Prostate gland (tissue), 2 donors: ENCODE measurements at regions of chr15 and their contacts with region 1.

Region 1: GRCh38 chr15:80058851-80059785 is at the start of gene ZFAND6:
- DNase-seq: peak; percentile 97
- H3K4me3 ChIP-seq: peak within 1 kb of the TSS; percentile 93 to 94
- H3K27ac ChIP-seq: peak within 1 kb of the TSS; percentile 97 to 99
- H3K4me1 ChIP-seq: no peaks in the 10 kb centered on the region
- H3K27me3 ChIP-seq: no peaks in the 10 kb centered on the region
- CTCF ChIP-seq: peak in 2 of 4 experiments; percentile 13 to 24
- POLR2A ChIP-seq: peak; percentile 70
- total RNA-seq, gene ZFAND6: 103 to 167 TPM

Region 2: DNA sequence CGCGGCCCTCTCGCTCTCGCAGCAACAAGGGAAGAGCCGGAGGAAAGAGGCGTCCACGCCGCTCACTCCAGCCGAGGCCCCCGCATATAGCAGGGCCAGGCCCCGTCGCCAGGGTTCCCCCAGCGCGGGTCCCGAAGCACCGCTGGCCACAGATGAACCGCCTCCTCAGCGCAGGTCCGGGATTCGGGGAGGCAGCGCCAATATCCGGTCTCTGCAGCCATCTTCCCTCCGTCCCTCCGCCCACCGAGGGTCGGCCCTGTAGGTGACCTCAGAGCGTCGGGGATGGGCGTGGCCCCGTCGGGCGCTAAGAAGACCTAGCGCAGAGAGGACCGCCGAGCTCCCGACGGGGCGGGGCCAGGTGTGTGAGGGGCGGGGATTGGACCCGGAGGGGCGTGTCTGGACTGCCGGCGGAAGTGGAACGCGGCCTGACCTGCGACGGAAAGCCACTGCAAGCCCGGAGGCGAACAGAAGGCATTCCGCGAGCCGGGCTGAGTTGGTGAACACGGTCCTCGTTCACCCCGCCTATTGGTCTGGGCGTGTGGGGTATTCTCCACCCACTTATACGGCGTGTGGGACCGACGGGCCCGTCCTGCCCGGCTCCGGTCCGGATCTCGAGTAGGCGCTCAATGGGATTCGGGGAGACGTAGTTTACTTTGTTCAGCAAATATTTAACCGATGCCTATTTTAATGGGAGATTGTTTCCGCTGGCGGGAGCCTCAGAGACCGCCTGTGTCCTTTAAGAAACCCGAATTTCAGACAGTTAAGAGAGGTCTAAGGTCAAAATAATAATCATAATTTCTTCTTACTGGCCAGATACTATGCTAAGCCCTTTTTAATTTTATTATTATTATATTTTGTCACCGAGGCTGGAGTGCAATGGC is 135.4 kb before region 1 on chr15:
- intact Hi-C with region 1: loop called (anchors 10 kb)
- DNase-seq: peak; percentile 96
- H3K4me3 ChIP-seq: peak overlapping the region; percentile 66 to 84
- H3K27ac ChIP-seq: peak overlapping the region; percentile 91 to 96
- H3K4me1 ChIP-seq: no peaks in the 10 kb centered on the region
- H3K27me3 ChIP-seq: no peaks in the 10 kb centered on the region
- CTCF ChIP-seq: peak in 2 of 4 experiments; percentile 7 to 11
- POLR2A ChIP-seq: peak; percentile 80

Region 3: DNA sequence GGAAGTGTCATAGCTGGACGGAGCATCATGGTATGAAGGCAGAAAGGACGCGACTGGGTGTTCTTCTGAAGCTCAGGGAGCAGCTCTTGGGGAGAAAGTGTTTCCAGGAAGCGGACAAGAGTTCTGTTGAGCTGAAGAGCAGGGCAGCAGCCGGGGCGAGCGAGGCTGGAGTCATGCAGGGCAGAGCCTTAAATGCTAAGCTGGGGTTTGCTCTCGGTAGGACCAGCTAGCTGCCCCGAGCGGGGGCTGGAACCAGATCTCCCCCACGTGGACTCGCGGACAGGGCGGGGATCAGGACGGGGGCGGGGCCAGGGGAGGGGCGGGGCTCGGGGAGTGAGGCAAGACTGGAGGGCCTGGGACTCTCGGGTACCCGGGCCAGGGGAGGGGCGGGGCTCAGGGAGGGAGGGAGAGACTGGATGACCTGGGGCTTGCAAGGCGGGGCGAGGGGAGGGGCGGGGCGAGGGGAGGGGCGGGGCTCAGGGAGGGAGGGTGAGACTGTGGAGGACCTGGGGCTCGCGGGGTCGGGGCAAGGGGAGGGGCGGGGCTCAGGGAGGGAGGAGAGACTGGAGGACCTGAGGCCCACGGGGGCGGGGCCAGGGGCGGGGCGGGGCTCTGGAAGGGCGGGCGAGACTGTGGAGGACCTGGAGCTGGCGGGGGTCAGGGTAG is 93.2 kb after region 1 on chr15:
- intact Hi-C with region 1: loop called (anchors 1 kb)
- DNase-seq: peak; percentile 93
- H3K4me3 ChIP-seq: peak overlapping the region; percentile 61 to 63
- H3K27ac ChIP-seq: peak overlapping the region; percentile 86 to 88
- H3K4me1 ChIP-seq: peaks cover 8% of the 10 kb centered on the region
- H3K27me3 ChIP-seq: no peaks in the 10 kb centered on the region
- CTCF ChIP-seq: no peak
- POLR2A ChIP-seq: no peak

Region 4: DNA sequence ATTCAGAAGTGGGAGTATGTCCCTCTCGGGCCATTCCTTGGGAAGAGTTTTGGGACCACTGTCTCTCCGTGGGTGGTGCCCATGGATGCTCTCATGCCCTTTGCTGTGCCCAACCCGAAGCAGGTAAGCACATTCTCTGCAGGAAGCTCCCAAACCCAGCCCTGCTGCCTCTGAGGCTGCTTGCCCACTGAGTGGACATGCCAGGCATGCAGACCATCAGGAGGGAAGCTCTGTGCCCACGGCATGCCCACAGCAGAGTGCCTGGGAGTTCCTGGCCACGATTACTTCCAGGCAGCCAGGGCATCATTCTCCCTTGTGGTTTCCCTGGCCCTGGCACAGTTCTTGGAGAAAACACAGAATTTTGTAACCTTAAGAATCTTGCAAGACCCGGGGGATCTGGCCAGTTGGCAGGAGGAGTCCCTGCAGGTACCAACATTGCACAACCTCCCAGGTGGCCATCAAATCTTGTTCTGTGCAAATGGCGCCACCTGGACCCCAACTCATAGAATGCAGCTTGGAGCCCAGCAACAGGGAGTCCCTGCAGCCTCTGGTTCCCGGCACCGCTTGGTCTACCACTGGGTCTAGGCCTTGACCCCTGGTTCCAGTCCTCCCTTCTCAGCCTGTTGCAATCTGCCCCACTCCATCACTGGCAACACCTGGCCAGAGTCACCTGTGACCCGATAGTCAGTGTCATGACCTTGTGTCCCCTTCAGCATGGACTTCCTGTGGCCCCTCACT is 114.1 kb after region 1 on chr15:
- intact Hi-C with region 1: loop called (anchors 5 kb)
- DNase-seq: peak; percentile 79
- H3K4me3 ChIP-seq: no peak overlapping the region
- H3K27ac ChIP-seq: peak overlapping the region in 1 of 2 donors; percentile 44
- H3K4me1 ChIP-seq: no peaks in the 10 kb centered on the region
- H3K27me3 ChIP-seq: no peaks in the 10 kb centered on the region
- CTCF ChIP-seq: peak in 3 of 4 experiments; percentile 58 to 79 (median 79)
- POLR2A ChIP-seq: no peak

Region 5: DNA sequence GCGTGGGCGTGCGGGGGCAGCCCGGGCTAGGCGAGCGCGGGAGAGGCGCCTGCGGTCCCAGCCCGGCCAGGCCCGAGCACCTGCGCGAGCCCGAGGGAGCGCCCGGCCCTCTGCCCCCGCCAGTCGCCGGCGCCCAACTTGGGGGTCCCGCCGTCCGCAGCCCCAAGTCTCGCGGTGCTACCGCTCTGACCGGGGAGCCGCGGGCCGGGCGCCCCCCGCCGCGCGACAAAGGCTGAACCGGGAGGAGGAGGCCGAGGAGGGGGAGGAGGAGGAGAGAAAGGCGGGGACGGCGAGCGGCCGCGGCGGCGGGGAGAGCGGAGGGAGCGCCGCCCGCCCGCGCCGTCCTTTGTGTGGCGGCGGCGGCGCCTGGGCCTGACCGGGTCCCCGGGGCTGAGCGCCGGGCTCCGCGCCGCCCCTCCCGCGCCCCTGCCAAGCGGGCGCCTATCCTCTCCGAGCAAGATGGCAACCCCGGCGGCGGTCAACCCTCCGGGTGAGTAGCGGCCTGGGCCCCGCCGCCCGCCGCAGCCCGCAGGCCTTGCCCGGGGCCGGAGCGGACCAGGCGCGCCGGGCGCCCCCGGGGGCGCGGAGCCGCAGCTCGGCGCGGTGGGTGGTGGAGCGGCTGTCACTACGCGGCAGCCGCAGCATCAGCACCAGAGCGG is 345.1 kb after region 1 on chr15 and contains the start of gene ARNT2:
- intact Hi-C with region 1: loop called (anchors 10 kb)
- DNase-seq: no peak
- H3K4me3 ChIP-seq: peak within 1 kb of the TSS; percentile 53 to 54
- H3K27ac ChIP-seq: peak within 1 kb of the TSS; percentile 67
- H3K4me1 ChIP-seq: no peaks in the 10 kb centered on the region
- H3K27me3 ChIP-seq: no peaks in the 10 kb centered on the region
- CTCF ChIP-seq: no peak
- POLR2A ChIP-seq: no peak
- total RNA-seq, gene ARNT2: 9.1 to 43.7 TPM